Left ventricle myocardium inferior (tissue), 1 donor: ENCODE measurements at regions of chr1 and their contacts with region 1.

Region 1: GRCh38 chr1:178055779-178056471 is 38.0 kb upstream of the RASAL2 start:
- DNase-seq: no peak
- H3K4me3 ChIP-seq: no peak overlapping the region
- H3K27ac ChIP-seq: peak overlapping the region; percentile 96
- H3K4me1 ChIP-seq: peaks cover 85% of the 10 kb centered on the region
- H3K27me3 ChIP-seq: no peaks in the 10 kb centered on the region
- CTCF ChIP-seq: peak; percentile 47

Region 2: DNA sequence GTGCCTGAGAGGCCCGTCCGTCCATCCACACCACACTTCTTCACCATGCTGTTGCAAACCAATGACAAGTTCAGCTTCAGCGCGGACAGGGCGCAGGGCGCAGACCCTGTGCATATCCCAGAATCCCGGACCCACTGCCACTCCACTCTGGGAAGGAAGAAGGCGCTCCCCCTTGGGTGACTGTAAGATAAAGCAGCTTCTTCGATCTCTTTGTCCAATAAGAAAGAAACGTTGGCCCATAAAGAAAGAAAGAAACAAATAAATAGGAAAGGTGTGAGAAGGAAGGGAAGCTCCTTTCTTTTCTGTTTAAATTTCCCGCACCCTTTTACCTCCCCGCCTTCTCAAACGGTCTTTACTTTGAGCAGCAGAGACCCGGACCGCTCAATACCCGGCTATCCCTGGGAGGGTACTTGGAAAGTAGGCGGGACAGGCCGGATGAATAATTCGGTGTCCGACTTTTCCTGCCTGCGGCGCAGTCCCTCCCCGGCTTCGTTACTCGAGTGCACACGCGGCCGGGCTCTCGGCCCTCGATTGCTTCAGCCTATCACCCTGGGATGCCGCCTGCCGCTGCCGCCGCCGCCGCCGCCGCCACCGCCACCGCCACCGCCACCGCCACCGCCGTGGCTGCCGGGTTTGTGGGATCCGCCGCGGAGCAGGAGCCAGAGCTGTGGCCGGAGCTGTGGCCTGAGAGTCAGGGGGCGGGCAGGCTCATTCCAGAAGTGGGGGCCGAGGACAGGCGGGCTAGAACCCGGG is 37.5 kb after region 1 on chr1:
- intact Hi-C with region 1: loop called (anchors 5 kb)
- DNase-seq: peak; percentile 93
- H3K4me3 ChIP-seq: peak overlapping the region; percentile 87
- H3K27ac ChIP-seq: peak overlapping the region; percentile 97
- H3K4me1 ChIP-seq: peaks cover 57% of the 10 kb centered on the region
- H3K27me3 ChIP-seq: no peaks in the 10 kb centered on the region
- CTCF ChIP-seq: no peak

Region 3: GRCh38 chr1:178189814-178190213 is 133.9 kb after region 1 on chr1:
- intact Hi-C with region 1: loop called (anchors 10 kb)
- DNase-seq: no peak
- H3K4me3 ChIP-seq: no peak overlapping the region
- H3K27ac ChIP-seq: no peak overlapping the region
- H3K4me1 ChIP-seq: peaks cover 53% of the 10 kb centered on the region
- H3K27me3 ChIP-seq: no peaks in the 10 kb centered on the region
- CTCF ChIP-seq: peak; percentile 71

Region 4: GRCh38 chr1:178220094-178220493 is 164.2 kb after region 1 on chr1:
- intact Hi-C with region 1: no loop called
- DNase-seq: no peak
- H3K4me3 ChIP-seq: no peak overlapping the region
- H3K27ac ChIP-seq: no peak overlapping the region
- H3K4me1 ChIP-seq: peaks cover 23% of the 10 kb centered on the region
- H3K27me3 ChIP-seq: no peaks in the 10 kb centered on the region
- CTCF ChIP-seq: no peak